H1 (cell line): ENCODE measurements at regions of chr9 and their contacts with region 1.

Region 1: DNA sequence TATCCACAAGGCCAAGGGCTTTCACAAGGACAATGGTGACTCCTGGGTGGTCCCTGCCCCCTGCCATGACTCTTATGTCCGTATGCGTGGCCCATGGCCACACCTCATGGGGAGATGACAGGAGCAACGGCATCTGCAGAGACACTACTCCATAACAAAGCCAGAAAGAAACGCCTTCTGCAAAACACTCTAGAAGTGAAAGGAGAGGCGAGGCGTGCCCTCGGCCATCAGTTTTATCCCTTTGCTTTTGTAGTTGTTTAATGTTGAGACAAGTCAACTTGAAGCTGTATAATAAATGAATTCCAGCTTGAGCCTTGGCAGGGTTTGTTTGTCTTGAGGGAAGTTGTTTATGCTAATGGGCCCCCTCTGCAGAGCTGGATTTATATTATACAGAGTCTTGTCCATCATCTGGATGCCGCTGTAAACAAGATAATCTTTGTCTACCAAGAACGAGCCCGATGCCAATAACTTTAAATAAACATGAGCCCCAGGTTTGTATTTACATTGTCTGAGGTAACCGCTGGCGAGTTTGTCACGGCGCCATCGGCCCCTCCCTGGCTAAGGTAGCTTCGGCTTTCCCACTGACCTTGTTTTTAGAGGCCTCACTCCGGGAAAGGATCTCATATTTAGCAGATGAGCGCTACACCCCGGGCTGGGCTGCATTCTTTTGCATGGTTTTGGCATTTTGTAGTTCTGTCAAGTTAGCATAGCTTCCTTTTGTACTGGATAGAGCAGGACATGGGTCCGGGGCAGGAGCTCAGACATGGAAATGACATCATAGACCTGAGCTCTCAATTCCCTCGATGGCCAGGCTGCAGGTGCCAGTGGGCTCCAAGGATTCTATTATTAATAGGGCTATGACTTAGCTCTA is 165.3 kb downstream of the ERCC6L2 start:
- DNase-seq: peak in 1 of 2 experiments; percentile 39
- H3K4me3 ChIP-seq: no peak overlapping the region
- H3K27ac ChIP-seq: no peak overlapping the region
- H3K4me1 ChIP-seq: peaks cover 0 to 5% (median 3%) of the 10 kb centered on the region in 4 experiments; a peak in 5 of 7 replicates
- H3K27me3 ChIP-seq: peaks cover 0 to 19% (median 4%) of the 10 kb centered on the region in 4 experiments; a peak in 5 of 7 replicates
- CTCF ChIP-seq: no peak
- EP300 ChIP-seq: peak in 1 of 2 experiments; percentile 20; a peak in 1 of 3 replicates
- POLR2A ChIP-seq: no peak
- RAD21 ChIP-seq: no peak

Region 2: GRCh38 chr9:96015876-96016686 is 24.7 kb before region 1 on chr9:
- CTCF ChIA-PET with region 1: no interaction called
- POLR2A ChIA-PET with region 1: no interaction called
- DNase-seq: no peak
- H3K4me3 ChIP-seq: no peak overlapping the region
- H3K27ac ChIP-seq: no peak overlapping the region
- H3K4me1 ChIP-seq: peaks cover 0 to 6% (median 3%) of the 10 kb centered on the region in 4 experiments; a peak in 3 of 7 replicates
- H3K27me3 ChIP-seq: peaks cover 9 to 20% (median 19%) of the 10 kb centered on the region in 4 experiments
- CTCF ChIP-seq: no peak
- EP300 ChIP-seq: no peak
- POLR2A ChIP-seq: no peak
- RAD21 ChIP-seq: no peak

Region 3: DNA sequence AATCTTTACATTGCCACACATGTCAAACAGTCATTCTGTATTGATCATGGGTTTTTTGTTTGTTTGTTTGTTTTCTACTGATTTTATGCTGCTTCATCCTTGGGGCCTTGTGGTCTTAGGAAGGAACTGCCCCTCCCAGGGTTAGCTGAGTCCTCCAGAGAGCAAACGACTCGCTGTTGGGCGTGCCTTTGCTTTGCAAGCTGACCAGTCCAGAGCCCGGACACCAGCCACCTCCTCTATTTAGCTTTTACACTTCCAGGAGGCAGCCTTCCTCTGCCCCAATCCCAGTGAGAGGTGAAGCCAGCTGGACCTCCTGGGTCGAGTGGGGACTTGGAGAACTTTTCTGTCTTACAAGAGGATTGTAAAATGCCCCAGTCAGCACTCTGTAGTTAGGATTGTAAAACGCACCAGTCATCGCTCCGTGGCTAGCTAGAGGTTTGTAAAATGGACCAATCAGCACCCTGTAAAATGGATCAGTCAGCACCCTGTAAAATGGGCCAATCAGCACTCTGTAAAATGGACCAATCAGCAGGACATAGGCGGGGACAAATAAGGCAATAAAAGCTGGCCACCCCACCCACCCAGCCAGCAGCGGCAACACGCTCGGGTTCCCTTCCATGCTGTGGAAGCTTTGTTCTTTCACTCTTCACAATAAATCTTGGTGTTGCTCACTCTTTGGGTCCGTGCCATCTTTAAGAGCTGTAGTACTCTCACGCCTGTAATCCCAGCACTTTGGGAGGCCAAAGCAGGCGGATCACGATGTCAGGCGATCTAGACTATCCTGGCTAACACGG is 10.9 kb before region 1 on chr9:
- CTCF ChIA-PET with region 1: interaction called, 10 read pairs
- POLR2A ChIA-PET with region 1: no interaction called
- DNase-seq: no peak
- H3K4me3 ChIP-seq: no peak overlapping the region
- H3K27ac ChIP-seq: no peak overlapping the region
- H3K4me1 ChIP-seq: peaks cover 0 to 8% (median 5%) of the 10 kb centered on the region in 4 experiments; a peak in 6 of 7 replicates
- H3K27me3 ChIP-seq: peaks cover 21 to 43% (median 37%) of the 10 kb centered on the region in 4 experiments
- CTCF ChIP-seq: no peak
- EP300 ChIP-seq: no peak
- POLR2A ChIP-seq: no peak
- RAD21 ChIP-seq: no peak